ENCODE measurements at regions of chr1 and their contacts with region 1.

Region 1: GRCh38 chr1:206808615-206809014 is 36.3 kb upstream of the IL10 start:
- DNase-seq: peak; percentile 39 to 62 (median 58)
- H3K4me3 ChIP-seq: no peak overlapping the region
- H3K4me3 Mint-ChIP-seq: no peak overlapping the region
- H3K27ac ChIP-seq: no peak overlapping the region
- H3K27ac Mint-ChIP-seq: peak overlapping the region in 1 of 7 donors; percentile 60
- H3K4me1 ChIP-seq: no peaks in the 10 kb centered on the region
- H3K4me1 Mint-ChIP-seq: no peaks in the 10 kb centered on the region
- H3K27me3 ChIP-seq: no peaks in the 10 kb centered on the region
- H3K27me3 Mint-ChIP-seq: peaks cover 3 to 7% (median 4%) of the 10 kb centered on the region in 3 donors
- CTCF ChIP-seq: peak; percentile 64

Region 2: GRCh38 chr1:206628916-206629315 is 179.7 kb before region 1 on chr1:
- intact Hi-C with region 1: loop called in 1 of 2 experiments (anchors 10 kb)
- DNase-seq: no peak
- H3K4me3 ChIP-seq: no peak overlapping the region
- H3K4me3 Mint-ChIP-seq: no peak overlapping the region
- H3K27ac ChIP-seq: no peak overlapping the region
- H3K27ac Mint-ChIP-seq: peak overlapping the region in 1 of 7 donors; percentile 46
- H3K4me1 ChIP-seq: peaks cover 4 to 8% of the 10 kb centered on the region in 2 donors
- H3K4me1 Mint-ChIP-seq: peaks cover 7% of the 10 kb centered on the region
- H3K27me3 ChIP-seq: no peaks in the 10 kb centered on the region
- H3K27me3 Mint-ChIP-seq: peaks cover 4 to 5% (median 4%) of the 10 kb centered on the region in 3 donors
- CTCF ChIP-seq: no peak

Region 3: DNA sequence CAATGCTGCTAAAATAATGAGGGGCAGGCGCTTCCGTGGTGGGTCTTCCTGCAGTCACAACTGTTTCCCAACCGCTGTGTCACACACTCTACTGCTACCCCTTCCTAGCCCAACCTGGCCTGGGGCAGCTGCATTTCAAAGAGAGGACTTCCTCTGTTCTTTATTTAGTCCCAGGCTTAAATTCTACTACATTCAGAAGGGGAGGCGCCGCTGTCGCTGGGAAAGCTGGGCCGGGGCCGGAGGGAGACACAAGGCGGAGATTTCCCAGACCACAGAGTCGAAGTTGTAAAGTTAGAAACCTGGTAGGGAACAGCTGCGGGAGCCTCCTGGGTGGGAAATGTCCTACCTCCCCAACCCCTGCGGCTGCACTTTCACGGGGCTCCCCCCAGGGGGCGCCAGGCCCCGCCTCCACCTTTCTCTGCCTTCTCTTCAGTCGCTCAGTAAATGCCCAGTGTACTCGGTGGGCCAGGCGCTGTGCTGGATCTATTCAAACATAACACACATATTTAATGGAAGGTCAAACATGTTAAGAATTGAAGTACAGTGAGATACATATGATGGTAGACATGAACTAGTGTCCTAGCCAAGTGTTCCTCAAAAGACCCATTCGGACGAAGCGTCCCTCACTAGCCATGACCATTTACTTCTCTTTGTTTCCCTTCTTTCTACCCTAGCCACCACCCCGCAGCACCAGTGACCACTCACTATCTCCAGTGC is 150.2 kb before region 1 on chr1:
- intact Hi-C with region 1: loop called in 1 of 2 experiments (anchors 10 kb)
- DNase-seq: peak; percentile 42 to 59 (median 44)
- H3K4me3 ChIP-seq: peak overlapping the region in 1 of 3 experiments; percentile 17
- H3K4me3 Mint-ChIP-seq: peak overlapping the region; percentile 60 to 62
- H3K27ac ChIP-seq: no peak overlapping the region
- H3K27ac Mint-ChIP-seq: peak overlapping the region in 3 of 7 donors; percentile 27 to 60 (median 42)
- H3K4me1 ChIP-seq: peaks cover 20 to 25% of the 10 kb centered on the region in 2 donors
- H3K4me1 Mint-ChIP-seq: peaks cover 24% of the 10 kb centered on the region
- H3K27me3 ChIP-seq: peaks cover 0 to 3% of the 10 kb centered on the region in 2 donors
- H3K27me3 Mint-ChIP-seq: peaks cover 14 to 27% (median 19%) of the 10 kb centered on the region in 3 donors
- CTCF ChIP-seq: peak; percentile 99

Region 4: DNA sequence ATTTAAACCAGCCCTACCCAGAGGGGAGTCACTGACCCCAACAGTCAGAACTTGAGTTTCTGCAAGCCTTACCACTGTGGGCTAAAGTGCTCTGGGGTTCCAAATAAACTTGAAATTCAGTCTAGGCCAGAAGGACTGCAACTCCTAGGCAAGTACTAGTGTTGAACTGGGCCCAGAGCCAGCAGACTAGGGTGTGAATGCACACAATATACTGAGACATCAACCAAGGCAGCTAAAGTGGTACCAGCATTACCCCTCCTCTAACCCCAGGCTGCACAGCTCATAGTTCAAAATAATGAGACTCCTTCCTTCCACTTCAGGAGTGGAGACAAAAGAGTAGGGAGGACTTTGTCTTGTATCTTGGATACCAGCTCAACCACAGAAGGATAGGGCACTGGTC is 37.9 kb after region 1 on chr1:
- intact Hi-C with region 1: no loop called
- DNase-seq: no peak
- H3K4me3 ChIP-seq: no peak overlapping the region
- H3K4me3 Mint-ChIP-seq: no peak overlapping the region
- H3K27ac ChIP-seq: no peak overlapping the region
- H3K27ac Mint-ChIP-seq: no peak overlapping the region
- H3K4me1 ChIP-seq: no peaks in the 10 kb centered on the region
- H3K4me1 Mint-ChIP-seq: peaks cover 3% of the 10 kb centered on the region
- H3K27me3 ChIP-seq: no peaks in the 10 kb centered on the region
- H3K27me3 Mint-ChIP-seq: peaks cover 2 to 7% (median 2%) of the 10 kb centered on the region in 3 donors
- CTCF ChIP-seq: no peak